PC-3 (cell line): ENCODE measurements at regions of chr14 and their contacts with region 1.

Region 1: GRCh38 chr14:24678801-24679247 is 44.8 kb upstream of the GZMB start:
- DNase-seq: peak; percentile 87
- ATAC-seq: peak; percentile 94
- H3K4me3 ChIP-seq: peak overlapping the region; percentile 50
- H3K27ac ChIP-seq: no peak overlapping the region
- H3K4me1 ChIP-seq: no peaks in the 10 kb centered on the region
- H3K27me3 ChIP-seq: no peaks in the 10 kb centered on the region
- CTCF ChIP-seq: peak; percentile 99

Region 2: GRCh38 chr14:24442273-24443052 is 236.4 kb before region 1 on chr14 and contains the start of gene SDR39U1:
- CTCF ChIA-PET with region 1: no interaction called
- POLR2A ChIA-PET with region 1: no interaction called
- intact Hi-C with region 1: loop called (anchors 5 kb)
- DNase-seq: peak; percentile 99
- ATAC-seq: peak; percentile 85
- H3K4me3 ChIP-seq: peak within 1 kb of the TSS; percentile 84
- H3K27ac ChIP-seq: peak within 1 kb of the TSS; percentile 97
- H3K4me1 ChIP-seq: peaks cover 10% of the 10 kb centered on the region
- H3K27me3 ChIP-seq: no peaks in the 10 kb centered on the region
- CTCF ChIP-seq: no peak
- total RNA-seq, gene SDR39U1: 24.7 and 29.8 TPM in 2 replicates